ENCODE measurements at regions of chr14 and their contacts with region 1.

Region 1: DNA sequence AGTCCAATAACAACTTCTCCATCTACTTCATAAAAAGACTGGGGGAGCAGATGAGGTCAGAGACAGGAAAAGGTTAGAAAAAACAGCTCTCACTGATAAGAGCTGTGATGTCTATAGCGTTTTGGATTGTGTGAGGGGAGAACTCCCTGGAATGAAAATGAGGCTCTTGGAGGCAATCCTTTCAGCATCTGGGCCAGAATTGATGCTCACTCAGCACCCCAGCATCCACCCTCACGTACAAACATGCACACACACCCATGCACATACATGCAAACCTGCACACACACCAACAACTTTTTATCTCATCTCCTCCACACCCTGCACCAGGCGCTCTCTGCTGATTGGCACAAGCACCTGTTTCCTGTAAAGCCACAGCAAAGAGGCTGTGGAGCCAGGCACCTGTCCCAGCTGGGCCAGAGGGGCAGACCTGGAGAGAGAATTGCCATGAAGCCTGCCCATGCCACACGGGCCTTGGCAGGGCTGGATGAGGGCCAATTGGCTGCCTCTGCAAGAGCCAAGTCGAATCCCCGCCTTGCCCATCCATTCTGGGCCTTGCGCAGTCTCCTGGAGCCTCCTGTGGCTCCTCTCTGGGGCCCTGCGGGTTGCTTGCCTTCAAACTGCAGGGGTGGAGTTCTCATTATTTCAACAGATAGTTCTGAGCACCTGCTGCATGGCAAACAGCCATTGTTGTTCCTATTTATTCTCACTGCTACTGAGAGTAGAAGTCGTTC is 53.1 kb downstream of the SYNE3 start:
- DNase-seq: peak; percentile 66
- H3K4me3 Mint-ChIP-seq: peak overlapping the region; percentile 45
- H3K27ac Mint-ChIP-seq: peak overlapping the region; percentile 93
- H3K4me1 Mint-ChIP-seq: peaks cover 57% of the 10 kb centered on the region
- H3K27me3 Mint-ChIP-seq: no peaks in the 10 kb centered on the region

Region 2: DNA sequence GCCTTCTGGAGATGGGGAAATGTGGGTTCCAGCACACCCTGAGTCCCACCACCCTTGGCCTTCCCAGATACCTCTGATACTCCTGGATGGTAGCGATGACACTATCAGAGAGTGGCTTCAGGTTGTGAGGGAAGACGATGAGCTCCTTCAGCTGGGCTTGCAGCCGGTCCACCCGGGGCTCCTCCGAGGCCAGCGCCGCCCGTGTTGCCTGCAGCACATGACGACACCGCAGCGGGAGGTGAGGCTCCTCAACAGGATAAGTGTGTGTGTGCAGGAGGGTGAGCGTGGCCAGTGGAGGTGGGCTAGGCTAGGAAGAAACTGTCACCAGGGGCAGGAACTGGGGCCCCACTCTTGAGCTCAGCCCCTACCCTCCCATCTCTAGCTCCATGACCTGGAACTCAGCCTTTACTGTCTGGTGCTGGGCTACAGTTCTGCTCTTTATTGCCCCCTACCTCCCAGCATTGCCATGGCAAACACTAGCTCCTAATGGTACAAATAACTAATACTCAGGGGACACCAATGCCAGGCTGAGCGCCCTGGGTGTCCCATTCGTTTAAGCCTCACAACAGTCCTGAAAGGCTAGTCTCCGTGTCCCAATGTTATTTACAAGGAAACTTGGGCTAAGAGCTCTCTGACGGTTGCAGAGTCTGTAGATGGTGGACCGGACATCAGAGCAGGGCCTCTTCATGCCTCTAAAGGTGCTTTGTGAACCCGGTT is 11.0 kb before region 1 on chr14:
- CTCF ChIA-PET with region 1: interaction called, 10 read pairs
- POLR2A ChIA-PET with region 1: no interaction called
- DNase-seq: peak; percentile 16
- H3K4me3 Mint-ChIP-seq: no peak overlapping the region
- H3K27ac Mint-ChIP-seq: peak overlapping the region; percentile 9
- H3K4me1 Mint-ChIP-seq: no peaks in the 10 kb centered on the region
- H3K27me3 Mint-ChIP-seq: no peaks in the 10 kb centered on the region

Measured in activated CD4-positive, alpha-beta T cell treated with anti-CD3 and anti-CD28 coated beads, Interleukin-2, amount 10 ng/mL, durations not matched to agents 7 days and 5 days (primary cell).